CD4-positive, alpha-beta memory T cell (primary cell): ENCODE measurements at regions of chr9 and their contacts with region 1.

Region 1: GRCh38 chr9:129962889-129963703 is 79.9 kb downstream of the FNBP1 start:
- DNase-seq: peak; percentile 85 to 94 (median 88)
- H3K4me3 ChIP-seq: peak overlapping the region; percentile 64 to 67
- H3K4me3 Mint-ChIP-seq: peak overlapping the region; percentile 75 to 92 (median 87)
- H3K27ac ChIP-seq: peak overlapping the region; percentile 90
- H3K27ac Mint-ChIP-seq: peak overlapping the region; percentile 95 to 99 (median 98)
- H3K4me1 ChIP-seq: peaks cover 55% of the 10 kb centered on the region
- H3K4me1 Mint-ChIP-seq: peaks cover 45 to 82% (median 66%) of the 10 kb centered on the region in 4 donors
- H3K27me3 ChIP-seq: no peaks in the 10 kb centered on the region
- H3K27me3 Mint-ChIP-seq: no peaks in the 10 kb centered on the region

Region 2: DNA sequence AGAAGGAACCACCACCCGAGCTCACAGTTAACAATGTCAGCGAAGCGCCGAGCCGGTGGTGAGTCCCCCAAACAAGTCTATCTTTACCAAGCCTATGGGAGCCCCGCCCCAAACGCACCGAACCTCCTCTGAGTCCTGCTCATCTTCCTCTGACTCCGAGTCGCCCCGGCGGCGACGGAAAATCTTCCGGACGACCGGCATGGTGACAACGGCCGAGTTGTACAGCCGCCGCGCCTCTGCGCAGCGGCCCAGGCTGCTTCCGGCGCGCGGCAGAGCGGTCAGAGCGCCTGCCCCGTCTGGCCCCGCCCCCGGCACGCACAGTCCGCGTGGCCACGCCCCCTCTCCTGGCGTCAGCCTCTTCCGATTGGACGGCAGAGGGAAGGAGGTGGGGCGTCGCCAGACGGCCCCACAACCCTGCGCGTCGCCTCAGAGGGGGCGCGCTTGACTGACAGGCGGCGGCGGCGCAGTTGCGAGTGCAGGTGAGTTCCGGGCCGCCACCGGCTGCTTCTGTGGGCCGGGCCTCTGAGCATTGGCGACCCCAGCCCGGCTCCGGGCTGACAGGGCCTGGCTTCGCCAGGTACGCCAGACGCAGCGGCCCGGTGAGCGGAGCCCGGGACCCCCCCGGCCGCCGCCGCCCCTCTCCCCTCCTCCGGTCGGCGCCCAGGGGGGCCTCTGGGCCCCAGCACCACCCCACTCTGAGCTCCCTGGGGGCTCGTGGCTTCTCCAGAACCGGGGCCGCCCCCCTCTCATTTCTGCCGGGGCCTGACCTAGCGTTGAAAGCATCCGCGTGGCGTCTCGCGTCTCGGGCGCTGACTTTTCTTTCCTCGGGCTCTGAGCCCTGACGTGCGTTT is 127.8 kb before region 1 on chr9 and contains the starts of genes C9orf78 and USP20:
- CTCF ChIA-PET with region 1: interaction called, 3 read pairs
- POLR2A ChIA-PET with region 1: interaction called, 4 read pairs
- intact Hi-C with region 1: loop called (anchors 5 kb)
- DNase-seq: peak; percentile 95 to 98 (median 98)
- H3K4me3 ChIP-seq: peak within 1 kb of the TSS; percentile 76 to 98
- H3K4me3 Mint-ChIP-seq: peak within 1 kb of the TSS; percentile 96 to 99 (median 98)
- H3K27ac ChIP-seq: peak within 1 kb of the TSS; percentile 92
- H3K27ac Mint-ChIP-seq: peak within 1 kb of the TSS; percentile 97 to 99 (median 99)
- H3K4me1 ChIP-seq: peaks cover 59% of the 10 kb centered on the region
- H3K4me1 Mint-ChIP-seq: peaks cover 40 to 69% (median 56%) of the 10 kb centered on the region in 4 donors
- H3K27me3 ChIP-seq: no peaks in the 10 kb centered on the region
- H3K27me3 Mint-ChIP-seq: no peaks in the 10 kb centered on the region
- total RNA-seq, gene C9orf78: 95.5 to 96.9 TPM
- total RNA-seq, gene USP20: 123 to 132 TPM

Region 3: GRCh38 chr9:129875181-129875611 is 87.9 kb before region 1 on chr9:
- CTCF ChIA-PET with region 1: no interaction called
- POLR2A ChIA-PET with region 1: no interaction called
- intact Hi-C with region 1: no loop called
- DNase-seq: no peak
- H3K4me3 ChIP-seq: no peak overlapping the region
- H3K4me3 Mint-ChIP-seq: no peak overlapping the region
- H3K27ac ChIP-seq: peak overlapping the region; percentile 28
- H3K27ac Mint-ChIP-seq: peak overlapping the region in 1 of 7 donors; percentile 3
- H3K4me1 ChIP-seq: peaks cover 39% of the 10 kb centered on the region
- H3K4me1 Mint-ChIP-seq: peaks cover 15 to 61% (median 32%) of the 10 kb centered on the region in 4 donors
- H3K27me3 ChIP-seq: no peaks in the 10 kb centered on the region
- H3K27me3 Mint-ChIP-seq: no peaks in the 10 kb centered on the region

Region 4: GRCh38 chr9:129938291-129938979 is 24.7 kb before region 1 on chr9:
- CTCF ChIA-PET with region 1: interaction called, 14 read pairs
- POLR2A ChIA-PET with region 1: interaction called, 10 read pairs
- intact Hi-C with region 1: no loop called
- DNase-seq: peak in 1 of 5 donors; percentile 49
- H3K4me3 ChIP-seq: no peak overlapping the region
- H3K4me3 Mint-ChIP-seq: peak overlapping the region in 6 of 8 donors; percentile 15 to 76 (median 40)
- H3K27ac ChIP-seq: no peak overlapping the region
- H3K27ac Mint-ChIP-seq: peak overlapping the region; percentile 57 to 91 (median 89)
- H3K4me1 ChIP-seq: peaks cover 55% of the 10 kb centered on the region
- H3K4me1 Mint-ChIP-seq: peaks cover 34 to 76% (median 54%) of the 10 kb centered on the region in 4 donors
- H3K27me3 ChIP-seq: no peaks in the 10 kb centered on the region
- H3K27me3 Mint-ChIP-seq: no peaks in the 10 kb centered on the region

Region 5: GRCh38 chr9:129949821-129950220 is 13.3 kb before region 1 on chr9:
- CTCF ChIA-PET with region 1: interaction called, 3 read pairs
- POLR2A ChIA-PET with region 1: interaction called, 46 read pairs
- intact Hi-C with region 1: loop called (anchors 1 kb)
- DNase-seq: no peak
- H3K4me3 ChIP-seq: no peak overlapping the region
- H3K4me3 Mint-ChIP-seq: no peak overlapping the region
- H3K27ac ChIP-seq: no peak overlapping the region
- H3K27ac Mint-ChIP-seq: peak overlapping the region in 6 of 7 donors; percentile 42 to 84 (median 72)
- H3K4me1 ChIP-seq: peaks cover 35% of the 10 kb centered on the region
- H3K4me1 Mint-ChIP-seq: peaks cover 26 to 51% (median 40%) of the 10 kb centered on the region in 4 donors
- H3K27me3 ChIP-seq: no peaks in the 10 kb centered on the region
- H3K27me3 Mint-ChIP-seq: no peaks in the 10 kb centered on the region

Region 6: GRCh38 chr9:129995409-129996160 is 32.5 kb after region 1 on chr9:
- CTCF ChIA-PET with region 1: interaction called, 6 read pairs
- POLR2A ChIA-PET with region 1: interaction called, 24 read pairs
- intact Hi-C with region 1: no loop called
- DNase-seq: peak in 2 of 5 donors; percentile 20 to 59
- H3K4me3 ChIP-seq: peak overlapping the region in 1 of 2 donors; percentile 15
- H3K4me3 Mint-ChIP-seq: peak overlapping the region; percentile 66 to 82 (median 76)
- H3K27ac ChIP-seq: peak overlapping the region; percentile 64
- H3K27ac Mint-ChIP-seq: peak overlapping the region; percentile 93 to 98 (median 96)
- H3K4me1 ChIP-seq: peaks cover 79% of the 10 kb centered on the region
- H3K4me1 Mint-ChIP-seq: peaks cover 55 to 87% (median 71%) of the 10 kb centered on the region in 4 donors
- H3K27me3 ChIP-seq: no peaks in the 10 kb centered on the region
- H3K27me3 Mint-ChIP-seq: no peaks in the 10 kb centered on the region